ENCODE measurements at regions of chr12 and their contacts with region 1.

Region 1: GRCh38 chr12:63068857-63069442 is 82.1 kb downstream of the AVPR1A start:
- DNase-seq: peak; percentile 87
- ATAC-seq: peak; percentile 48
- H3K4me3 ChIP-seq: no peak overlapping the region
- H3K27ac ChIP-seq: no peak overlapping the region
- H3K4me1 ChIP-seq: peaks cover 12% of the 10 kb centered on the region
- H3K27me3 ChIP-seq: no peaks in the 10 kb centered on the region
- CTCF ChIP-seq: peak; percentile 88

Region 2: DNA sequence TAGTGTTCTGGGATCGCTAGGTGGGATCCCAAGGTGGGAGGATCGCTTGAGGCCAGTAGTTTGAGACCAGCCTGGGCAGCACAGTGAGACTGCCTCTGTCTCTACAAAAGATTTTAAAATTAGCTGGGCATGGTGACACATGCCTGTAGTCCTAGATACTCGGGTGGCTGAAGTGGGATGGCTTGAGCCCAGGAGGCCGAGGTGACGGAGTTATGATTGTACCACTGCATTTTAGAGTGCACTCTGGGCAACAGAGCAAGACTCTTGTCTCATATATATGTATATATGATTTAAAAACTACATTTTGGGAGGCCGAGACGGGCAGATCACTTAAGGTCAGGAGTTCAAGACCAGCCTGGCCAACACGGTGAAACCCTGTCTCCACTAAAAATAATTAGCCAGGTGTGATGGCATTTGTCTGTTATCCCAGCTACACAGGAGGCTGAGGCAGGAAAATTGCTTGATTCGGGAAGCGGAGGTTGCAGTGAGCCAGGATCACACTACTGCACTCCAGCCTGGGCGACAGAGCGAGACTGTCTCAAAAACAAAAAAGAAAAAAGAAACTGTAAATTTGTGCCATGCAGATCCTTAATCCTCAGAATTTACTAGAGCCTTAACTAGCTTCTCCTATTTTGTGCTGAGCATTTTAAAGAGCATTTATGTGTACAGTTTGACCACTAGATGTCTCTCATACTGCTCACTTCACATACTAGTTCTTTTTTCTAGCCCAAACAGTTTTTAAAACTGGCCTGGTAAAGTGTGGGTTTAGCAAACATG is 487.5 kb before region 1 on chr12:
- CTCF ChIA-PET with region 1: interaction called, 6 read pairs
- POLR2A ChIA-PET with region 1: no interaction called
- intact Hi-C with region 1: loop called (anchors 5 kb)
- DNase-seq: peak; percentile 65
- ATAC-seq: peak; percentile 89
- H3K4me3 ChIP-seq: no peak overlapping the region
- H3K27ac ChIP-seq: no peak overlapping the region
- H3K4me1 ChIP-seq: no peaks in the 10 kb centered on the region
- H3K27me3 ChIP-seq: no peaks in the 10 kb centered on the region
- CTCF ChIP-seq: peak; percentile 83

Region 3: GRCh38 chr12:62848421-62848820 is 220.5 kb before region 1 on chr12:
- CTCF ChIA-PET with region 1: no interaction called
- POLR2A ChIA-PET with region 1: no interaction called
- intact Hi-C with region 1: loop called (anchors 2 kb)
- DNase-seq: peak; percentile 82
- ATAC-seq: peak; percentile 93
- H3K4me3 ChIP-seq: no peak overlapping the region
- H3K27ac ChIP-seq: peak overlapping the region; percentile 56
- H3K4me1 ChIP-seq: peaks cover 15% of the 10 kb centered on the region
- H3K27me3 ChIP-seq: no peaks in the 10 kb centered on the region
- CTCF ChIP-seq: no peak

Region 4: DNA sequence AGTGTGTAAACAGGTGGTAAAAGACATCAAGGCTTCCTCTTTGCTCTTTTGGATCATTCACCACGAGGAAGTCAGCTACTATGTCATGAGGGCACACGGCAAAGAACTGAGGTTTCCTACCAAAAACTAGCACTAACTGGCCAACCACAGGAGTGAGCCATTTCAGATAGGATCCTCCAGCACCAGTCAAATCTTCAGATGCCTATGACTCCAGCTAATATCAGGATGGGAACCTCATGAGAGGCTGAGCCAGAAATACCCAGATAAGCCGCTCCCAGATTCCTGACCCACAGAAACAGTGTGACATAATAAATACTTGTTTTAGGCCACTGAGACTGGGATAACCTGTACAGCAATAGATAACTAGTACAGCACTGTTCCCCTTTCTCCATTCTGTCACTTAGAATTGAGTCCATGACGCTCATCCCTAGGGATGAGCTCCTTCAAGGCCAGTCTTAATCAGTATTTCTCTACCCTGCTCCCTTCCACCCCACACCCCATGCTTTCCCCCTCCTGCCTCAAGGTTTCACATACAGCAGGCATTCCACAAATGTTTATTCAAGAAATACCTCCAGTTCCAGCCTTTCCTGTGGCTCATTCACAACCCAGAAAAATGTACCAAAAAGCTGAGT is 202.4 kb before region 1 on chr12:
- CTCF ChIA-PET with region 1: no interaction called
- POLR2A ChIA-PET with region 1: no interaction called
- intact Hi-C with region 1: no loop called
- DNase-seq: peak; percentile 81
- ATAC-seq: peak; percentile 82
- H3K4me3 ChIP-seq: no peak overlapping the region
- H3K27ac ChIP-seq: peak overlapping the region; percentile 42
- H3K4me1 ChIP-seq: peaks cover 56% of the 10 kb centered on the region
- H3K27me3 ChIP-seq: no peaks in the 10 kb centered on the region
- CTCF ChIP-seq: no peak

Region 5: DNA sequence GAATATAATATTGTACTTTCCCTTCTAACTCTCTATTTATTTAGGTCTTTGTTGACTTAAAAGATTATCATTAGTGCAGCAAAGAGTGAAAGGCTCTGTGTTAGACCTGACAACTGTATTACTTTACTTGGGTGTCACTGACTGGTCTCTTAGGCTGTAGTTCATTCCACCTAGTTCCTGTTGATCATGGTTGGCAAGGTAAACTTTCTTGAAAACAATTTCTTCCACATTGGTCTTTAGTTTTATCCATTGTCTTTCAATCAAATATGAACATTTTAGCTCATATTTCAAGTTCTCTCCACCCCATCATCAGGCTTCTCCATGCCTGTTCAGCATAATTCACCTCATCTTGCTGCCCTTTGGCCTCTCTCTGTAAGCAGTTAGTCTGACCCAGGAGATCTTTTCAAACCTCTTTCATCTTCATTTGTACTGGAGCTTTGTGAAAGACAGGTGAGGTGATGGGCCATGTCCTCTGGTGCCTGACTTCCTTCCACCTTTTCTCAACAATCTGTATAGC is 101.9 kb before region 1 on chr12:
- CTCF ChIA-PET with region 1: interaction called, 5 read pairs
- POLR2A ChIA-PET with region 1: interaction called, 4 read pairs
- intact Hi-C with region 1: loop called (anchors 5 kb)
- DNase-seq: peak; percentile 50
- ATAC-seq: peak; percentile 57
- H3K4me3 ChIP-seq: peak overlapping the region; percentile 16; the same call in 1 of the 2 replicates
- H3K27ac ChIP-seq: peak overlapping the region; percentile 78
- H3K4me1 ChIP-seq: peaks cover 39% of the 10 kb centered on the region
- H3K27me3 ChIP-seq: no peaks in the 10 kb centered on the region
- CTCF ChIP-seq: no peak